Activated CD4-positive, alpha-beta memory T cell treated with anti-CD3 and anti-CD28 coated beads for 36 hours (primary cell): ENCODE measurements at regions of chr12 and their contacts with region 1.

Region 1: DNA sequence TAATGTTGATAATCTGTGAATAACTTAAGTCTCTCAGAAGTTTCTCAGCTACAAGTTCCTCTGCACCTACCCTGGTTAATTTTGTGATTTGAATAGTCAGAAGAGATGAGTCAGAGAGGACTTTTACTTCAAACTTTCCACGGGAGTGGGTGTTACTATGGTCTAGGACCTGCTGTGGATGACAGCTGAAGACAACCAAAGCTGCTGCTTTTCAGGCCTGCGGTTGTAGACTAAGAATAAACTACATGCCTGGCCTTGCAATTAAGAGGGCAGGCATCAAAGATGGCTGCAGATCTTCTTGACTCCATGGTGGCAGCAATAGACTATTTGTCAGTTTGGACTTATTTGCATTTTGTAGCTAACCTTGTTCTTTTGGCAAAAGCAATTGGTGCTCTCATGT is 227.1 kb upstream of the KRR1 start:
- DNase-seq: peak; percentile 51
- H3K4me3 Mint-ChIP-seq: no peak overlapping the region
- H3K27ac Mint-ChIP-seq: no peak overlapping the region
- H3K4me1 Mint-ChIP-seq: peaks cover 18% of the 10 kb centered on the region
- H3K27me3 Mint-ChIP-seq: peaks cover 2% of the 10 kb centered on the region

Region 2: GRCh38 chr12:75722714-75723200 is 15.7 kb before region 1 on chr12:
- CTCF ChIA-PET with region 1: no interaction called
- POLR2A ChIA-PET with region 1: no interaction called
- intact Hi-C with region 1: loop called (anchors 1 kb)
- DNase-seq: peak; percentile 56
- H3K4me3 Mint-ChIP-seq: no peak overlapping the region
- H3K27ac Mint-ChIP-seq: peak overlapping the region; percentile 28
- H3K4me1 Mint-ChIP-seq: peaks cover 15% of the 10 kb centered on the region
- H3K27me3 Mint-ChIP-seq: no peaks in the 10 kb centered on the region

Region 3: DNA sequence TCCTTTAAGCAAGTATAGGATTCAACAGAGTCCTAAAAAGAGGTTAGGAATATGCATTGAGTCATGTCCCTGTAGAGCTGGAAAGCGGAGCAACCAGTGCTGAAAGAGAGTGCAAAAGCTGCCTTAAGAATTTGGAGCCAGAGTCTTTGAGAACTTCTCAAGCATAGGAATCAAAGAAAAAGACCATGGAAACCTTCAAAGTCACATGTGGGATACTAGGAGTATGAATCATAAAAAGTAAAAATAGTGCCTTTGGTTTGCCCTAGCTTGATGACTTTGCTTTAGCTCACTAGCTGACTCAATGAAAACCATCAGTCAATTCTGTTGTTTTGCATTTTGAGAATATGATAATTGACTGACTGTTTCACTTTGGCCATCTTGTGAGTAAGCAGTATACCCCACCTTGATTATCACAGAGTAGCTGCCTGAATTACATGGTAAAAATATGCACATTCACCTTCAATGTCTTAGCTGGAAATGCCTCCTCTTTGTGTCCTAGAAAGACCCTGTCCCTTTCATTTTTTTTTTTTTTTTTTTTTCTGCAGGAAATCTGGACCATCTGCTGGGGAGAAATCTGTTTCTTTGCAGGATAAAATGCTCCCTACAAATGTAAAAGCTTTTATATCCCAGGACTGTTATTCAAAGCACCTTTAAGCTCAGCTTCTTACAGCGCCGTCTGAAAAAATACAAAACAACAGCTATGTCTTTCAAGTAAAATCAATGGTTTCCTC is 21.5 kb after region 1 on chr12:
- CTCF ChIA-PET with region 1: no interaction called
- POLR2A ChIA-PET with region 1: no interaction called
- intact Hi-C with region 1: loop called (anchors 1 kb)
- DNase-seq: no peak
- H3K4me3 Mint-ChIP-seq: no peak overlapping the region
- H3K27ac Mint-ChIP-seq: no peak overlapping the region
- H3K4me1 Mint-ChIP-seq: peaks cover 16% of the 10 kb centered on the region
- H3K27me3 Mint-ChIP-seq: no peaks in the 10 kb centered on the region

Region 4: GRCh38 chr12:75784591-75784990 is 46.1 kb after region 1 on chr12:
- CTCF ChIA-PET with region 1: no interaction called
- POLR2A ChIA-PET with region 1: interaction called, 3 read pairs
- intact Hi-C with region 1: loop called (anchors 10 kb)
- DNase-seq: no peak
- H3K4me3 Mint-ChIP-seq: no peak overlapping the region
- H3K27ac Mint-ChIP-seq: no peak overlapping the region
- H3K4me1 Mint-ChIP-seq: peaks cover 10% of the 10 kb centered on the region
- H3K27me3 Mint-ChIP-seq: peaks cover 5% of the 10 kb centered on the region

Region 5: GRCh38 chr12:76720068-76720467 is 981.6 kb after region 1 on chr12:
- CTCF ChIA-PET with region 1: no interaction called
- POLR2A ChIA-PET with region 1: no interaction called
- intact Hi-C with region 1: no loop called
- DNase-seq: no peak
- H3K4me3 Mint-ChIP-seq: no peak overlapping the region
- H3K27ac Mint-ChIP-seq: no peak overlapping the region
- H3K4me1 Mint-ChIP-seq: no peaks in the 10 kb centered on the region
- H3K27me3 Mint-ChIP-seq: no peaks in the 10 kb centered on the region